ENCODE measurements at regions of chr20 and their contacts with region 1.

Region 1: DNA sequence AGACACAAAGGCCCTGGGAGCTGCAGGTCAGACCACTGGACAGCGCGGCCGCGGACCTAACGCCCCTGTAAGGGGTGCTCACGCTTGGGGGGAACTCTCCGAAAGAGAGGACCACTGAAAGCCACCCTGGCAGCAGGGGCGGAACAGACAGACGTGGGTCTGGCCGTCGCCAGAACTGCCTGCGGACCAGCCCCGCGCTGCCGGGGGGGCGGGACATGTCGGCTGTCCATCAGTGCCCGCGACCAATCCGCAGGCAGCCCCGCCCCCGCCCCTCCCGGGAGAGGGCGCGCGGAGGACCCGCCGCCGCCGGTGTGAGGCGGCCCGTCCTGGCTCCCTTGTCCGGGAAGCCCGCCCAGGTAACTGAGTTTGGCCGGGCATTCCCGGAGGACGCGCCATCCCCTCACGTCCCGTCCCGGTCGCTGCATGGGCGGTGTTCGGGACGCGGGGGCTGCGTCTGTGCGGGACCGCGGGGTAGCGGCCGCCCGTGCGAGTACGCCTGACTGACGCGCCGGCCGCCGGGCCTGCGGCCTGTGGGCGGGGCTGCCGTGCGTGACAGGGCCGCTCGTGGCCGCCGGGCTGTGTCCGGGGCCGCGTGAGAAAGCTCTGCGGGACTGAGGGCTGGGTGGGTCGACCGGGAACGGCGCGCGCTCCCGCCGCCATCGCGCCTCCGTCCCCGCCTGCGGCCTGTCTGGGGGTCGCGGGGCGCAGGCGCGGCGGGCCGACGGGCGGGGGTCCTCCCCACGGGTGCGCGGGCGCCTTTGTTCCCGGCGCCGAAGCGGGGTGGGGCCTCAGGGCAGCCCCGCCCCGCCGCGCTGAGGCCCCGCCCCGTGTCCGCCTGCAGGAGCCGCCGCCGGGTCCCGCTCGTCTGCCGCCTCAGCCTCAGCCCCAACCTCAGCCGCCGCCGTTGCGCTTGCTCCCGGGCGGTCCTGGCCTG is at the start of gene PLCG1:
- DNase-seq: peak; percentile 82 to 85
- ATAC-seq: peak; percentile 84 to 87
- H3K4me3 ChIP-seq: peak within 1 kb of the TSS; percentile 62 to 90 (median 77)
- H3K27ac ChIP-seq: peak within 1 kb of the TSS; percentile 90 to 99 (median 94)
- H3K4me1 ChIP-seq: peaks cover 32 to 46% of the 10 kb centered on the region in 2 donors
- H3K27me3 ChIP-seq: no peaks in the 10 kb centered on the region
- CTCF ChIP-seq: peak in 1 of 5 experiments; percentile 18
- POLR2A ChIP-seq: peak; percentile 82 to 83
- total RNA-seq, gene PLCG1: 19.9 to 58.0 (median 35.0) TPM

Region 2: DNA sequence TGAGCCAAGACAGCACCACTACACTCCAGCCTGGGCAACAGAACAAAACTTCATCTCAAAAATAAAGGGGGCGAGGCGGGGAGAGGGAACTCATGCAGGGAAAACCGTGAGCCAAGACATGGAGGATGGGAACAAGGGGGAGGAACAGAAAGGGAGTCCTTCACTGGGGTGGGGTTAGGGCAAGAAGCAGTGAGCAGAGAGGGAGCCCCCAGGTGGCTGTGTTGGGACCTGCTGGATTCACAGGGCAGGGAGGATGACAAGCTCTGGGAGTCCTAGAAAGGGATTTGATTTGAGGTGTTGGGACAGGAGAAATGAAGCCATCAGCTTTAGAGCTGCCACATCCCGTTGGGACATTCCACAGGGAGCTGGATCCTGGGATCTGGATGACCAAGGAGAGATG is 198.9 kb before region 1 on chr20:
- in situ Hi-C with region 1: no loop called
- intact Hi-C with region 1: no loop called
- DNase-seq: no peak
- ATAC-seq: no peak
- H3K4me3 ChIP-seq: no peak overlapping the region
- H3K27ac ChIP-seq: no peak overlapping the region
- H3K4me1 ChIP-seq: no peaks in the 10 kb centered on the region
- H3K27me3 ChIP-seq: no peaks in the 10 kb centered on the region
- CTCF ChIP-seq: no peak
- POLR2A ChIP-seq: no peak

Region 3: GRCh38 chr20:40948465-40949267 is 188.3 kb before region 1 on chr20:
- in situ Hi-C with region 1: no loop called
- intact Hi-C with region 1: no loop called
- DNase-seq: no peak
- ATAC-seq: no peak
- H3K4me3 ChIP-seq: no peak overlapping the region
- H3K27ac ChIP-seq: no peak overlapping the region
- H3K4me1 ChIP-seq: no peaks in the 10 kb centered on the region
- H3K27me3 ChIP-seq: no peaks in the 10 kb centered on the region
- CTCF ChIP-seq: no peak
- POLR2A ChIP-seq: no peak

Region 4: DNA sequence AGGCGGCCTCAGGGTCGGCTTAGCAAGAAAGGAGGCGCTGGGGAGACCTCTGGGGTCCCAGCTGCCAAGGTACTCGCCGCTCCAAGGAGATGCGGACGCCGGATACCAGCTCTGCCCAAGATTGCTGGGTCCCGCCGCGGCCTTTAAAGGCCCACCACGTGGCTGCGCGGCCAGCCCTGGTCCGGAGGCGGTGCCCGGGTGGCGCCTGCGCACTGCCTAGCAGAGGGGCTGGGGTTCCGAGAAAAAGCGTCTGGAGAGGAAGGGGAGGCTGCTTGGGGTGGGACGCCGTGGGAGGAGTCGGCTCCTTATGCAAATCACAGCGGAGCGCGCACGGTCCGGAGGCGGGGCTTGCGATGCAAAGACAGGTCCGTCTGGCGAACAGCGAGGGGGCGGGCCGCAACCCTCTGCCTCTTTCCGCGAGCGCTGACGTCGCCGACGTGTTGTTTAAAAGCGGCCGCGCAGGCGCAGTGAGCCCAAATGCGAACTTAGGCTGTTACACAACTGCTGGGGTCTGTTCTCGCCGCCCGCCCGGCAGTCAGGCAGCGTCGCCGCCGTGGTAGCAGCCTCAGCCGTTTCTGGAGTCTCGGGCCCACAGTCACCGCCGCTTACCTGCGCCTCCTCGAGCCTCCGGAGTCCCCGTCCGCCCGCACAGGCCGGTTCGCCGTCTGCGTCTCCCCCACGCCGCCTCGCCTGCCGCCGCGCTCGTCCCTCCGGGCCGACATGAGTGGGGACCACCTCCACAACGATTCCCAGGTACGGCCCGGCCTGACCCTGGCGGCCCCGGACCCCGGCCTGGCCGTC is 108.4 kb before region 1 on chr20 and contains the start of gene TOP1:
- in situ Hi-C with region 1: no loop called
- intact Hi-C with region 1: loop called (anchors 5 kb)
- DNase-seq: peak; percentile 99 to 100
- ATAC-seq: peak; percentile 94 to 95
- H3K4me3 ChIP-seq: peak within 1 kb of the TSS; percentile 75 to 99 (median 96)
- H3K27ac ChIP-seq: peak within 1 kb of the TSS; percentile 93 to 99 (median 98)
- H3K4me1 ChIP-seq: peaks cover 41 to 45% of the 10 kb centered on the region in 2 donors
- H3K27me3 ChIP-seq: no peaks in the 10 kb centered on the region
- CTCF ChIP-seq: peak in 1 of 5 experiments; percentile 13
- POLR2A ChIP-seq: peak; percentile 98
- total RNA-seq, gene TOP1: 9.4 to 13.6 (median 12.2) TPM

Region 5: GRCh38 chr20:41173161-41173721 is 36.3 kb after region 1 on chr20:
- in situ Hi-C with region 1: no loop called
- intact Hi-C with region 1: loop called (anchors 5 kb)
- DNase-seq: peak; percentile 73 to 83
- ATAC-seq: peak; percentile 85 to 88
- H3K4me3 ChIP-seq: no peak overlapping the region
- H3K27ac ChIP-seq: peak overlapping the region; percentile 68 to 80 (median 76)
- H3K4me1 ChIP-seq: peaks cover 59 to 65% of the 10 kb centered on the region in 2 donors
- H3K27me3 ChIP-seq: no peaks in the 10 kb centered on the region
- CTCF ChIP-seq: peak; percentile 96 to 98 (median 97)
- POLR2A ChIP-seq: no peak

Region 6: DNA sequence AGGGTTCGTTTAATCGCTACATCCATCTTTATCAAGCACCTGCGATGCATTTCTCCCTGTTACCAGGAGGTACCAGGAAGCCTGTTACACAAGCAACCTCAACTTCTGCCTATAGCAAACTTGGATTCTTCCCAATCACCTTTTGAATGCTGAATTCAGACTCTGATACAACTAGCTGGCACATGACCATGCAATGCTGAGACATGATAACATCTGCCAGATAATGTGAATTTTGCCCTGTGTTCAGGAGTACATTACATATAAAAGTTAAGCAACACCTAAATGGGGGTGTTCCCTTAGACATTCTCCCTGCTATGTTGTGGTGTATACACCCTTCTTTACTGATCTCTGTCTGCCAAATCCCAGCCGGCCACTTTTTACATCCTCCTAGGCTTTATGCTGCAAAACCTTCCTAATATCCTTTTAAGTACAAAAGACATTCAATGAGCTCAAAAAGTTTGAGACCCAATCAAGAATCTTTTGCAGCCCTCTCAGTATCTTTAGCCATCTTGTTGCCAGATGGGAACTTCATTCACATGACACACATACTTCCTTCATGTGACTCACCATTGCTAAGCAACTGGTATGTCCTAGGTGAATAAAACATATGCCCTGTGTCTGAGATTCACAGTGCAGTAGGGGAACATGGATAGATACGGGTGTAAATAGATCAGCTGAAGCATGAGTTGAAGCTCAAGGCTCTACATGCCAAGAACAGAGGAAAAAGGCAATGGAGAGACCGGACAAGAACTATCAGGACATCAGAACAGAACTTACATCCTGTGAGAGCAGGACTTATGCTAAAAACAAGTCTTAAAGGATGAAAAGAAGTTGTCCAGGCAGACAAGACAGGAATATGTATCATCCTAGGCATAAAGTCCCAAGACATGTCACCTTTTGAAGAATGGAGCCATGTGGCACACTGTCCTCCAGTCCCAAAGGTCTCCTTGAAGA is 96.3 kb after region 1 on chr20:
- in situ Hi-C with region 1: no loop called
- intact Hi-C with region 1: loop called (anchors 1 kb)
- DNase-seq: no peak
- ATAC-seq: peak; percentile 54 to 72
- H3K4me3 ChIP-seq: peak overlapping the region in 3 of 4 donors; percentile 20 to 39 (median 28)
- H3K27ac ChIP-seq: peak overlapping the region; percentile 78 to 91 (median 86)
- H3K4me1 ChIP-seq: peaks cover 65% of the 10 kb centered on the region in 2 donors
- H3K27me3 ChIP-seq: no peaks in the 10 kb centered on the region
- CTCF ChIP-seq: no peak
- POLR2A ChIP-seq: no peak

Region 7: GRCh38 chr20:41317536-41318270 is 180.8 kb after region 1 on chr20 and contains the start of gene ZHX3:
- in situ Hi-C with region 1: no loop called
- intact Hi-C with region 1: loop called (anchors 1 kb)
- DNase-seq: peak; percentile 92 to 95
- ATAC-seq: peak; percentile 89
- H3K4me3 ChIP-seq: peak within 1 kb of the TSS; percentile 77 to 95 (median 80)
- H3K27ac ChIP-seq: peak within 1 kb of the TSS; percentile 84 to 96 (median 91)
- H3K4me1 ChIP-seq: peaks cover 37 to 40% of the 10 kb centered on the region in 2 donors
- H3K27me3 ChIP-seq: no peaks in the 10 kb centered on the region
- CTCF ChIP-seq: no peak
- POLR2A ChIP-seq: peak; percentile 70 to 85
- total RNA-seq, gene ZHX3: 20.1 to 30.0 (median 25.9) TPM